MCF 10A (cell line): ENCODE measurements at regions of chr4 and their contacts with region 1.

Region 1: GRCh38 chr4:21469438-21470300 is 478.9 kb downstream of the KCNIP4 start:
- DNase-seq: peak; percentile 47
- H3K4me3 Mint-ChIP-seq: no peak overlapping the region
- H3K27ac Mint-ChIP-seq: peak overlapping the region; percentile 62
- H3K4me1 Mint-ChIP-seq: peaks cover 25% of the 10 kb centered on the region
- H3K27me3 Mint-ChIP-seq: peaks cover 10% of the 10 kb centered on the region
- CTCF ChIP-seq: peak; percentile 63

Region 2: DNA sequence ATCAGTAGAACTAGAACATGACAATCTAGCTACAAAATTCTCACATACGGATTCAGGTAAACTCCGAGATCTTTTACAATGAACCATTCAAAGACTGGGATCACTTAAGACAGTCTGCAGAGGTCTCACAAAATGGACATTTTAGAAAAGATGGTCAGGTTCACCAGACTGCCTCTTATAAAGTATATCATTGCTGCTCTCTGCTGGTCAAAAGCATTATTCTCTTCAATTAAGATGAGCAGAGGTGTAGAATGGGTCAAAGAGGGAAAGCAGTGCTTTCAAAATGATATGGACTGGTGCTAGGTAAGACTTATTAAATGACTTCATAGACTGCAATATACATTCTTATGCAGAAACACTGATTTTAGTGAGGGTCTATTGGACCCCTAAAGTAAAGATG is 334.7 kb before region 1 on chr4:
- CTCF ChIA-PET with region 1: interaction called, 11 read pairs
- POLR2A ChIA-PET with region 1: no interaction called
- intact Hi-C with region 1: no loop called
- DNase-seq: peak; percentile 54
- H3K4me3 Mint-ChIP-seq: no peak overlapping the region
- H3K27ac Mint-ChIP-seq: no peak overlapping the region
- H3K4me1 Mint-ChIP-seq: no peaks in the 10 kb centered on the region
- H3K27me3 Mint-ChIP-seq: no peaks in the 10 kb centered on the region
- CTCF ChIP-seq: peak; percentile 52

Region 3: DNA sequence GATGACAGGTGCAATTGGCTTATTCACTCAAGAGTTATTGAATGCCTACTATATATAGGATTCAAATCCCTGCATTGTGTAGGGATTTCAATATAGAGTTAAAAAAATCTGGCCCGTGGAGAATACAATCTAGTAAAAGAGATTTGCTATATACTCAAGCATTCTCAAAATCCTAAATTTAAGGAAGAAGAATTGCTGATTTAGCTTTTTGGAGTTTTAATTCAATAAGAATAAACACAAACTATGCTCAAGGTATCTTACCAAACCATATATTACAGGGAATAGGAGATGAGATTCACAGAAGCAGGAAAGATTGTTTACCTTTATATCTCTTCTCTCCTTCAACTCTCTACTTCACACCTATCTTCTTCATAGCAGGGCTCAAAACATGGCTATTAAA is 292.6 kb before region 1 on chr4:
- CTCF ChIA-PET with region 1: interaction called, 107 read pairs
- POLR2A ChIA-PET with region 1: interaction called, 9 read pairs
- intact Hi-C with region 1: no loop called
- DNase-seq: no peak
- H3K4me3 Mint-ChIP-seq: no peak overlapping the region
- H3K27ac Mint-ChIP-seq: no peak overlapping the region
- H3K4me1 Mint-ChIP-seq: peaks cover 8% of the 10 kb centered on the region
- H3K27me3 Mint-ChIP-seq: no peaks in the 10 kb centered on the region
- CTCF ChIP-seq: no peak

Region 4: DNA sequence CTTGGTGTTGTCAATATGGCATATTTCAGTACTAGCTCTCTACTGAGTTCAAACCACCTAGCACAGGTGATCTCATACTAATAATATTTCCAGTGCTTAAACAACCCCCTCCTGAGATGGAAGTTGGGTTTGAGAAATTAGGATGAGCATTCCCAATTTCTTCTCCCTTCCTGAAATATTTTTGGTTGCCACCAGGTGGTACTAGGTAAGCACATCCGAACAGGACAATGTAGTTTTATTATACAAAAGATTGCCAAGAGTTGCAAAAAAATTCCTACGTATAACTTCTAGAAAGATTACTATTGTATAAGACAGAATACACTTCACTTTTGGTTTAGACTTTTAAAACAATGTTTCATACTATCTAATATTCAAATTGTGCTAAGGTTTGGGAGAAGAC is 284.9 kb before region 1 on chr4:
- CTCF ChIA-PET with region 1: interaction called, 107 read pairs
- POLR2A ChIA-PET with region 1: interaction called, 20 read pairs
- intact Hi-C with region 1: loop called (anchors 1 kb)
- DNase-seq: peak; percentile 34
- H3K4me3 Mint-ChIP-seq: no peak overlapping the region
- H3K27ac Mint-ChIP-seq: no peak overlapping the region
- H3K4me1 Mint-ChIP-seq: peaks cover 24% of the 10 kb centered on the region
- H3K27me3 Mint-ChIP-seq: no peaks in the 10 kb centered on the region
- CTCF ChIP-seq: peak; percentile 40

Region 5: DNA sequence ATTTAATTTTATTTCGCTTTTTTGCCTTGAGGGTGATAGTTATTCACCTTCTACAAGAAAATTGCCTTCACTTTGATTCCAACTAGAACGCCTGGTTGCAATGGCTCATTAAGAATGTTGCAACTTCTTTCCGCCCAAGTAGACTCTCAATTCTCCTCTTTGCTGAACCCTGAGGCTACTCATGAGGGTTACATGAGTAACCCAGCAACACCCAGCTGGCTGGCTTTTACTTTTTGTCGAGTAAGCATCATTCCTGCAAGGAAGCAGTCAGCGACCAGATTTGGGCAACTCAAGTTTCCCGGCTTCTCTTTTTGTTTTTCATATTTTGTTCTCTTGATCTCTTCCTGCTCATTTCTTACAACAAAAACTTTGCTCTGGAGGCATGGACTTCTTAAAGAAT is 274.0 kb before region 1 on chr4:
- CTCF ChIA-PET with region 1: interaction called, 23 read pairs
- POLR2A ChIA-PET with region 1: interaction called, 11 read pairs
- intact Hi-C with region 1: loop called (anchors 5 kb)
- DNase-seq: peak; percentile 93
- H3K4me3 Mint-ChIP-seq: no peak overlapping the region
- H3K27ac Mint-ChIP-seq: no peak overlapping the region
- H3K4me1 Mint-ChIP-seq: peaks cover 17% of the 10 kb centered on the region
- H3K27me3 Mint-ChIP-seq: no peaks in the 10 kb centered on the region
- CTCF ChIP-seq: no peak

Region 6: GRCh38 chr4:21387683-21388082 is 82.0 kb before region 1 on chr4:
- CTCF ChIA-PET with region 1: interaction called, 4 read pairs
- POLR2A ChIA-PET with region 1: interaction called, 14 read pairs
- intact Hi-C with region 1: no loop called
- DNase-seq: peak; percentile 63
- H3K4me3 Mint-ChIP-seq: peak overlapping the region; percentile 13
- H3K27ac Mint-ChIP-seq: peak overlapping the region; percentile 77
- H3K4me1 Mint-ChIP-seq: peaks cover 39% of the 10 kb centered on the region
- H3K27me3 Mint-ChIP-seq: no peaks in the 10 kb centered on the region
- CTCF ChIP-seq: no peak

Region 7: DNA sequence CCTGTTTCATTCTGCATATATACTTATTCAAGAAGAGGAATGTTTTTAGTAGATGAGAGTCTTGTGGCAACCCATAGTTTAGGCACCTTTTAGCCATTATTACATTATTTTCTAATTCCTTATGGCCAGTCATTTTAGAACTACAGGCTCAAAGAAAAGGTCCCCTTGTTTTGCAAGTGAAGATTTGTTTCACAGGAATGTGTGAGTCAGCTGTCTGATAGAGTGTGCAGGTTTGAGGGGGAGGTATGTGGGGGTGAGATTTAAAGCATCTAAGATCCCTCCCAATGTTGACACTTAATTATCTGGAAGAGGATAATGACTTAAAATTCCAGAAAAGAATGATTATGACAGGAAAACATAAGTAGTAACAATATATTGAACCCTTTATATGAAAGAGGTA is 16.7 kb before region 1 on chr4:
- CTCF ChIA-PET with region 1: interaction called, 21 read pairs
- POLR2A ChIA-PET with region 1: interaction called, 4 read pairs
- intact Hi-C with region 1: no loop called
- DNase-seq: no peak
- H3K4me3 Mint-ChIP-seq: no peak overlapping the region
- H3K27ac Mint-ChIP-seq: no peak overlapping the region
- H3K4me1 Mint-ChIP-seq: peaks cover 24% of the 10 kb centered on the region
- H3K27me3 Mint-ChIP-seq: no peaks in the 10 kb centered on the region
- CTCF ChIP-seq: no peak

Region 8: DNA sequence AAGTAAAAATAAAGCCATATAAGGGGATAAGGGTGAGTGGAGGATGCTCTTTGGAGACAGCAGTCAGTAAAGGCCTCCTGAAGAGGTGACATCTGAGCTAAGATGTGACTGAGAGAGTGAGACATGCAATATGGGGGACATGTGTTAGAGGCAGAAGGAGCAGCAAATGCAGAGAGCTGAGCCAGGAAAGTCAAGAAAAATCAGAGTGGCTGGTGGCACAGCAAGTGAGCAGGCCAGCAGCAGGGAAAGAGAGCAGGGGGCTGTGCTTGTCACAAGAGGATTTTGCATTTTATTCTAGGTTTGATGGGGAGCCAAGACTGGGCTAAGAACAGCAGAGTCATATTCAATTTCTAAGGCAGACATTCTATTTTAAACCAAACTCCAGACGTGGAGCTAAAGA is 84.4 kb after region 1 on chr4:
- CTCF ChIA-PET with region 1: no interaction called
- POLR2A ChIA-PET with region 1: no interaction called
- intact Hi-C with region 1: no loop called
- DNase-seq: no peak
- H3K4me3 Mint-ChIP-seq: no peak overlapping the region
- H3K27ac Mint-ChIP-seq: no peak overlapping the region
- H3K4me1 Mint-ChIP-seq: no peaks in the 10 kb centered on the region
- H3K27me3 Mint-ChIP-seq: peaks cover 67% of the 10 kb centered on the region
- CTCF ChIP-seq: no peak